ENCODE measurements at regions of chr17 and their contacts with region 1.

Region 1: DNA sequence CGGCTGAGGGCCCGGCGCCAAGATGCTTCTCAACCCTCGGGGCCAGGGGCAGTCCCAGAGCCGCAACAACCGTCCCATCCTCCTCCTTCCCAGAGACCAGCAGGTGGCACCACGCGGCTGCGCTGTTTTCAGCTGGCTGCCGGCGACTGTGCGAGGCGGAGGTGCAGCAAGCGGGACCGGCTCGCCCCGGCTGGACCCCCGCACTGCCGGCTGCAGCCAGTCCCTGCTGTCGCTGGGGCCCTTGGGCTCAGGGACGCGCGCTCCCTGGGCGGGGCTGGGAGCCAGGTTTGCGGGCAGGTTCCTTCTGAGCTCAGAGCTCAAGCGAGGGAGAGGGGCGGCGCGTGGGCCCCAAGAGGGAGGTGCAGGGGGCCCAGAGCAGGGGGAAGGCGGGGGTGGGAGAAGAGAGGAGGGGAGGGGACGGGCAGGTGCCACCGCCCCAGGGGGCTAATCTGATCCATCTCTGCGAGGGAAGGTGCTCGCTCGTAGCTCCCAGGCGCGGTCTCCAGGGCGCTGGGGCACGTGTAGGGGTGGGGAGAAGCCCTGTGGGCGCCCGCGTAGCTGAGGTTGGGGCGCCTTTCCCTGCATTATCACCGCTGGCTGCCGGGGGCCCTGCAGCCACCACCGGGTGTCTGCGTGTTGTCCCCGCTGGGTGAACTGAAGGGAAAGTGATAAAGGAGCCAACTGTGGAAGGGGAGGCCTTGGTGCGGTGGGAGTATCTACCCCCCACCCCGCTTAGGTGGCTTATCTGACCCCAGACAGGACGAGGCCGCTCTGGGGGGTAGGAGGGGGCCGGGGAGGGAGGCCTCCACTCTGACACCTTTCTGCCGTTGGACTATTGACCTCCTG is 24.2 kb downstream of the STAT5A start:
- DNase-seq: peak; percentile 73
- H3K4me3 ChIP-seq: no peak overlapping the region
- H3K27ac ChIP-seq: no peak overlapping the region
- H3K4me1 ChIP-seq: peaks cover 7% of the 10 kb centered on the region
- H3K27me3 ChIP-seq: no peaks in the 10 kb centered on the region
- CTCF ChIP-seq: peak; percentile 59

Region 2: DNA sequence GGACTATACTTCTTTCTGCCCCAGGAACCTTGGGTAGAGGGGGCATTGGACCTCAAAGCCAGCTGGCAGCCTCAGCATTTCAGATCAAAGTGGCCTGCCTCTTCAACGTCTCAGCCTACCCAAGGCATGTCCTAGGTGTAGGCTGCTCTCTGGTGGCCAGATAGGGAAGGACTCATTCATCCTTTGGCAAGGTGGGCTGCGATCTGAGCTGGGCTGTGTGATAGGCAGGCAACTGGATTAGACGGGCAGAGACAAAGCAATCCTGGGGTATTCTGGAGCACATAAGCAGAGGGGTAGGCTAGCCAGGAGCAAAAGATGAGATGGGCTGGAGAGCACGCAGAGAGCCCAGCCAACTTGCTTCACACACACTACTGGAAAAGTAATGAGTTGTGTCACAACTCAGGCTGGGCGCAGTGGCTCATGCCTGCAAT is 214.8 kb after region 1 on chr17:
- CTCF ChIA-PET with region 1: interaction called, 16 read pairs
- POLR2A ChIA-PET with region 1: no interaction called
- intact Hi-C with region 1: loop called (anchors 10 kb)
- DNase-seq: peak; percentile 75
- H3K4me3 ChIP-seq: no peak overlapping the region
- H3K27ac ChIP-seq: no peak overlapping the region
- H3K4me1 ChIP-seq: no peaks in the 10 kb centered on the region
- H3K27me3 ChIP-seq: no peaks in the 10 kb centered on the region
- CTCF ChIP-seq: peak; percentile 65